Activated CD4-positive, alpha-beta T cell treated with anti-CD3 and anti-CD28 coated beads for 36 hours (primary cell): ENCODE measurements at regions of chr9 and their contacts with region 1.

Region 1: GRCh38 chr9:95852059-95853032 is 23.1 kb upstream of the ERCC6L2 start:
- DNase-seq: peak; percentile 22
- ATAC-seq: peak; percentile 96
- H3K4me3 Mint-ChIP-seq: no peak overlapping the region
- H3K27ac Mint-ChIP-seq: peak overlapping the region; percentile 58
- H3K4me1 Mint-ChIP-seq: peaks cover 19% of the 10 kb centered on the region
- H3K27me3 Mint-ChIP-seq: no peaks in the 10 kb centered on the region

Region 2: DNA sequence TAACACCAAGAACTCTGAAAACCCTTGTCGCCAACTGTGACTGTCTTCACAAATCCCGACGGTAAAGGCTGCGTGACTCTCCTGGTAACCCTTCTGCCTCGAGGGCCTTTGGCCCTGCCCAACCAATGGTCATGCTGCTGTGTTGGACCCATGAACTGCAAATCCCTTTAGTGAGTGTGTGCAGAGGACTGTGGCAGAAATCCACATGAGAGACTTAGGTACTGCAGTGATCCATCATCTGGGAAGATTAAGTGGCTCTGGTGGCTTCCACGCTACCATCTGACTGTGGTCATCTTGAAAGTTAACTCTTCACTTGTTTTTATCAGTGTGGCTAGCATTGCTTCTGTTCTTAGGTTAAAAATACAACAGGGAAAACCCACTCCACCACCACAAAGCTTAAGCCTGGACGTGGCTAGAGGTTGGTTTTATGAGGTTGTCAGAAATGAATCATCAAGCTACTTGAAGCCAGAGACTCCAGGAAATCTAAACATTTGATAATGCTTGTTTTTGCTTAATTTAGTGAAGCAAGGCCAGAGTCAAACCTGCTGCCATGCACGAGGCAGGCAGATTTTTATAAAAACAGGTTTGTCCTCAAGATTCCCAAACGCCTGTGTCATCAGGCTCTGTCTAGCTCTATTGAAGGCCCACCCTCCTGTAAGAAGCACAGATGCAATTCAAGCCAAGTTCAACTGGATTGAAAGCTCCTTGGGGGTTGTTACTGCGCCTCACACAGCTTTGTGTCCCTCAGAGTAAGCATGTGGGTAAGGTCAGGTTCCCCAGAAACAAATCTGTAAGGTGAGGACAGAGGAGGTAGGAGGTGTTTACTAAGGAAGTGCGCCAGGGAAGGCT is 29.5 kb before region 1 on chr9:
- CTCF ChIA-PET with region 1: no interaction called
- POLR2A ChIA-PET with region 1: no interaction called
- intact Hi-C with region 1: loop called (anchors 1 to 2 kb)
- DNase-seq: peak; percentile 55
- ATAC-seq: peak; percentile 86
- H3K4me3 Mint-ChIP-seq: no peak overlapping the region
- H3K27ac Mint-ChIP-seq: no peak overlapping the region
- H3K4me1 Mint-ChIP-seq: peaks cover 14% of the 10 kb centered on the region
- H3K27me3 Mint-ChIP-seq: no peaks in the 10 kb centered on the region